ENCODE measurements at regions of chr20 and their contacts with region 1.

Region 1: GRCh38 chr20:1118336-1119127 is at the start of gene PSMF1:
- DNase-seq: peak; percentile 99
- H3K4me3 Mint-ChIP-seq: peak within 1 kb of the TSS; percentile 96
- H3K27ac Mint-ChIP-seq: peak within 1 kb of the TSS; percentile 88
- H3K4me1 Mint-ChIP-seq: peaks cover 47% of the 10 kb centered on the region
- H3K27me3 Mint-ChIP-seq: peaks cover 2% of the 10 kb centered on the region
- total RNA-seq, gene PSMF1: 168 and 172 TPM in 2 replicates

Region 2: GRCh38 chr20:833450-834150 is 284.9 kb before region 1 on chr20 and contains the start of gene FAM110A:
- intact Hi-C with region 1: loop called (anchors 2 kb)
- DNase-seq: peak; percentile 99
- H3K4me3 Mint-ChIP-seq: peak within 1 kb of the TSS; percentile 84
- H3K27ac Mint-ChIP-seq: peak within 1 kb of the TSS; percentile 85
- H3K4me1 Mint-ChIP-seq: peaks cover 43% of the 10 kb centered on the region
- H3K27me3 Mint-ChIP-seq: no peaks in the 10 kb centered on the region
- total RNA-seq, gene FAM110A: 13.3 and 15.4 TPM in 2 replicates

Region 3: GRCh38 chr20:1130847-1131246 is 12.3 kb after region 1 on chr20:
- intact Hi-C with region 1: no loop called
- DNase-seq: peak; percentile 41
- H3K4me3 Mint-ChIP-seq: no peak overlapping the region
- H3K27ac Mint-ChIP-seq: no peak overlapping the region
- H3K4me1 Mint-ChIP-seq: peaks cover 19% of the 10 kb centered on the region
- H3K27me3 Mint-ChIP-seq: no peaks in the 10 kb centered on the region

Region 4: GRCh38 chr20:1185790-1186334 is 67.3 kb after region 1 on chr20:
- intact Hi-C with region 1: loop called (anchors 2 kb)
- DNase-seq: peak; percentile 87
- H3K4me3 Mint-ChIP-seq: peak overlapping the region; percentile 78
- H3K27ac Mint-ChIP-seq: no peak overlapping the region
- H3K4me1 Mint-ChIP-seq: peaks cover 10% of the 10 kb centered on the region
- H3K27me3 Mint-ChIP-seq: peaks cover 47% of the 10 kb centered on the region

Region 5: DNA sequence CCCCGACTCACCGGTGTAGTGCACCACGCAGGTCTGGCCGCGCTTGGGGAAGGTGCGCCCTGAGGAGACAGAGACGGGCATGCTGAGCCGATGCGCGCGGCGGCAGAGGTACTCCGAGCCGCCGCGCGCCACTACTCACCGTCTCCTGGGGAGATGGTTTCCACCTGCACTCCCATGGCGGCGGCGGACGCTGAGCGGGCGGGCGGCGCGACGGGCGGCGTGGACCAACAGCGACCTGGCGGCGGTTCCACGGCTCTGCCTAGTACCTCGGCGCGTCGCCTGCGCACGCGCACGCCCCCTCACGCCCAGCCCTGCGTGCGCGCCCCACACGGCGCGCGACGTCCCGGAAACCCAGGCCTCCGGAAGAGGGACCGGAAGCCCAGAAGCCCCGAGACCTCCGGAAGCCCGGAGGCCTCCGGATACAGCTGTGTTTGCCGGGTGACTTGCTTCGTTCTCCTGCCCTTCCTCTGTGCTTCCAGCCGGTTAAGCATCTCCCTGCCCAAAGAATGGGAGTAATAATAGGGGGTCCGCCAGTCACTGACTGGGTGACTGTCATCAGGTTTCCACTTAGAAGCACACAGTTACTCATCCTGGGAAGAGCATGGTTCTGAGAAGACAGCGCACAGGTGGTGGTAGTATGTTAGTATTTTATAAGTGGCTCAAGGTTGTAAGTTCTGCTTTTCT is 274.4 kb after region 1 on chr20 and contains the start of gene FKBP1A:
- intact Hi-C with region 1: loop called (anchors 1 kb)
- DNase-seq: peak; percentile 97
- H3K4me3 Mint-ChIP-seq: peak within 1 kb of the TSS; percentile 79
- H3K27ac Mint-ChIP-seq: peak within 1 kb of the TSS; percentile 90
- H3K4me1 Mint-ChIP-seq: peaks cover 51% of the 10 kb centered on the region
- H3K27me3 Mint-ChIP-seq: peaks cover 3% of the 10 kb centered on the region
- total RNA-seq, gene FKBP1A: 291 and 292 TPM in 2 replicates

Measured in activated CD4-positive, alpha-beta T cell treated with anti-CD3 and anti-CD28 coated beads, Interleukin-2, amount 10 ng/mL, durations not matched to agents 24 days and 14 days (primary cell).